Stomach (tissue), 19 donors: ENCODE measurements at regions of chr1 and their contacts with region 1.

Region 1: GRCh38 chr1:6245086-6245868 is 1.3 kb downstream of the HES3 start:
- DNase-seq: peak; percentile 83 to 95
- H3K4me3 ChIP-seq: peak overlapping the region in 3 of 4 donors; percentile 0 to 34 (median 16)
- H3K27ac ChIP-seq: no peak overlapping the region
- H3K4me1 ChIP-seq: peaks cover 35 to 59% (median 56%) of the 10 kb centered on the region in 4 donors
- H3K27me3 ChIP-seq: peaks cover 22 to 100% (median 85%) of the 10 kb centered on the region in 3 donors
- CTCF ChIP-seq: peak in 5 of 7 experiments; percentile 61 to 89 (median 77)
- EP300 ChIP-seq: no peak
- POLR2A ChIP-seq: no peak

Region 2: DNA sequence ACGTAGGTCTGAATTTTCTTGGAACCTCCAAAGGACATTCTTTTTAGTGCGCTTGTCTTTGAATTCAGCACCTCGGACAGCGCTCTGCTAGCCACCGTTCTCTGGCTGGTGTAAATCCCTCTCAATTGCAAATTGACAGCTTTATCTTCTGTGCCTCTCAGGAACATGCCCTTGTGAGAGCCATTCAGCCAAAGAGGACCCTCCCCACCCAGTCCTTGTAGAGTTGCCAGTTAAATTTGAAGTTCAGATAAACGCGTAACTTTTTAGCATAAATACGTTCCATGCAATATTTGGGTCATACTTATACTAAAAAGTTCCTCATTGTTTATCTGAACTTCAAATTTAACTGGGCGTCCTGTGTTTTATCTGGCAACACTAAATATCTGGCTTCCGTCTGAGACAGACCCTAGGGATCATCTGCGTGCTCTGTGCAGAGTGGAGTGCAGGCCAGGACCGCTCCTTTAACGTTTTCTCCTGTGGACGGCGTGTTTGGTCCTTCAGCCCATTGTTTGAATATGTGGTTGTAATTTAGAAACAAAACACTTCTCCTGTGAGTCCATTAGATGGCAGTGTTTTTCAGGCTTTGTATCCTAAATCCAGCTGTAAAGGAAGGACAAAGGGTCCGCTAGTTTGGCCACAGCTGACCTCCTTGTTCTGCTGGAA is 192.6 kb before region 1 on chr1:
- intact Hi-C with region 1: loop called (anchors 10 kb)
- DNase-seq: peak; percentile 65 to 87
- H3K4me3 ChIP-seq: no peak overlapping the region
- H3K27ac ChIP-seq: no peak overlapping the region
- H3K4me1 ChIP-seq: peaks cover 0 to 6% (median 0%) of the 10 kb centered on the region in 4 donors
- H3K27me3 ChIP-seq: peaks cover 0 to 7% (median 0%) of the 10 kb centered on the region in 3 donors
- CTCF ChIP-seq: peak in 3 of 7 experiments; percentile 9 to 25 (median 23)
- EP300 ChIP-seq: no peak
- POLR2A ChIP-seq: no peak

Region 3: DNA sequence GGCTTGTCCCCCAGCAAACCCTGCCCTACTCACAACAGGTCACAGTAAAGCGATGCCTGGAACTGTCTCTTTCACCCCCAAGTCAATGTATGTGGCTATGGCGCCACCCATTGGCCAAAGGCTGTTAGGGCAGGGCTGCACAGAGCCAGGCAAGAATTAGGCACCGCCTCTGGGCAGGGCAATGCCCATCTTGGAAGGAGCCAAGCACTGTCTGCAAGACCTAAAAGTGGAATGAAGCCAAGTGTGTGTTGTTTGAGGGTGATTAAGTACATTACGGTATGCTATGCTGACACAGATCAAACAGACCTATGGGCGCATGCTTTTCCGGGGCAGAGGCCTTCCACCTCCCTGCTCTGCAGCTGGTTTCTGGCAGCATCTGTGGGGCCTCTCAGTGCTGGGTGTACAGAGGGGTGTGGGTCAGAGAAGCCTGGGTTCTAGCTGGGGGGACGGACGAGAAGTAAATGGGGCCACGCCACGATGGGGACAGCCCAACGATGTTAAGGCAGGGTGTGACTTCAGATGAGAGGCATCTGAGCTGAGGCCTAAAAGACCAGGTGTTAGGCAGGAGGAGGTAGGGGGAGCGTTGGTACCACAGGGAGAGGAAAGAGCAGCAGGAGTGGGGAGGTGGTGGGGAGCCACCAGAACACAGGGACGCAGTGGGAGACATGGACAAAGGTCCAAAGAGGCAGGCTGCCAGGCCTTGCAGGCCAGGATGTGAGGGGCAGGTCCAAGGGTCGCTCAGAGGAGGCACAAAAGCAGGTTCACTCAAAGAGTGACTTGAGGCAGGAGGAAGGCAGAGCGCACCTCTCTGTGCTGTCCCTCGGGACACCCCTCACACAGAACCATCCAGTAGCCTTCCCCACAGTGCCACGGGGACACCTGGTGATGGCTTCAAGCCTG is 98.5 kb after region 1 on chr1:
- intact Hi-C with region 1: loop called (anchors 5 kb)
- DNase-seq: peak; percentile 76 to 94
- H3K4me3 ChIP-seq: no peak overlapping the region
- H3K27ac ChIP-seq: no peak overlapping the region
- H3K4me1 ChIP-seq: peaks cover 0 to 18% (median 13%) of the 10 kb centered on the region in 4 donors
- H3K27me3 ChIP-seq: no peaks in the 10 kb centered on the region
- CTCF ChIP-seq: peak in 5 of 7 experiments; percentile 79 to 91 (median 87)
- EP300 ChIP-seq: no peak
- POLR2A ChIP-seq: no peak

Region 4: DNA sequence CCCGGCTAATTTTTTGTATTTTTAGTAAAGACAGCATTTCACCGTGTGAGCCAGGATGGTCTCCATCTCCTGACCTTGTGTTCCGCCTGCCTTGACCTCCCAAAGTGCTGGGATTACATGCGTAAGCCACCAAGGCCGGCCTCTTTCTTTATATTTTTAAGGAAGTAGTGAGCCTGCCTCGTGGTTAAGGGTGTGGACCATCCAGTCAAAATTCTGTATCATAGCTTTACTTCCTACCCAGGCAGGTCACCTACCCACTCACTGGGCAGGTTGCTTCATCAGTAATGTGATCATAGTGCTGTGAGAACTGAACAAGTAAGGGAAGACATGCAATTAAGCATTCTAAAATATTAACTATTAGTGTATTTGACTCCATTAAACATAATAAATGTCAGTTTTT is 156.4 kb after region 1 on chr1:
- intact Hi-C with region 1: loop called (anchors 10 kb)
- DNase-seq: no peak
- H3K4me3 ChIP-seq: no peak overlapping the region
- H3K27ac ChIP-seq: no peak overlapping the region
- H3K4me1 ChIP-seq: peaks cover 0 to 8% (median 3%) of the 10 kb centered on the region in 4 donors
- H3K27me3 ChIP-seq: peaks cover 0 to 15% (median 0%) of the 10 kb centered on the region in 3 donors
- CTCF ChIP-seq: no peak
- EP300 ChIP-seq: no peak
- POLR2A ChIP-seq: no peak